OCI-LY7 (cell line): ENCODE measurements at regions of chr6 and their contacts with region 1.

Region 1: GRCh38 chr6:106727480-106728149 is 98.2 kb downstream of the QRSL1 start:
- DNase-seq: no peak
- H3K4me3 ChIP-seq: no peak overlapping the region
- H3K27ac ChIP-seq: no peak overlapping the region
- H3K4me1 ChIP-seq: peaks cover 37% of the 10 kb centered on the region
- CTCF ChIP-seq: no peak

Region 2: GRCh38 chr6:106715922-106716321 is 11.7 kb before region 1 on chr6:
- CTCF ChIA-PET with region 1: no interaction called
- POLR2A ChIA-PET with region 1: interaction called, 17 read pairs
- intact Hi-C with region 1: no loop called
- DNase-seq: peak; percentile 84
- H3K4me3 ChIP-seq: peak overlapping the region; percentile 61
- H3K27ac ChIP-seq: peak overlapping the region; percentile 93
- H3K4me1 ChIP-seq: peaks cover 73% of the 10 kb centered on the region
- CTCF ChIP-seq: no peak